Dendritic cell treated with granulocyte-macrophage colony-stimulating factor and Interleukin-4, amounts not matched to agents 40 ng/mL and 50 ng/mL, for 4 days (primary cell): ENCODE measurements at regions of chrX and their contacts with region 1.

Region 1: DNA sequence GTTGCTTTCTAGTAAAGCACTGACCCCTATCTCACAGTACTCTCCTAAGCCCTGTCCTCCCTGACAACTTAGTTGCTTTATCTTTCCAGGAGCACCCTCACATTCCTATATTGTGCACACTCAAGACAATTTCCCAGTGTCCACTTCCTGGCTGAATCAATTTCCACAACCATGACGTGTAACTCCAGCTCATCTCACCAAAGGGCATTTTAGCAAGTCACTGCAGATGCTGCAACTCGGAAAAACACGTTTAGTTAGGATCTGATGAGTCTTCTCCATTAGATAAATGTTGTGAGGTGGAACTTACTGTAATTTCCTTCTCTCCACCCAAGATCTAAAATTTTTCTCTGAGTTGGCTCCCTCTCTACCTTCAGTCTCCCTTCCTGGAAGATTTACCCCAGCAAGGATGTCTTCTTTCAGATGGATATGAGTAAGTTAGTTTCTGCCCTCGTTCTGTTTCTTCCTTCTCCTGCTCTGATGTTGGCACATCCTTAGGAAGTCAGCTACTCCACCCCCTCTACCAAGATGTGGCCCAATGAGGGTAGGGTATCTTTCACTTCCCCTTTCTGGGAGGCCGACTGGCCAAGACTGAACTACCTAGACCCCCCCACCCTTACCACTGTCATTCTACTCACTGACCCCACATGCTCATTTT is 28.8 kb upstream of the IL13RA1 start:
- H3K4me3 Mint-ChIP-seq: peak overlapping the region; percentile 56
- H3K27ac Mint-ChIP-seq: peak overlapping the region; percentile 84
- H3K4me1 Mint-ChIP-seq: peaks cover 25% of the 10 kb centered on the region
- H3K27me3 Mint-ChIP-seq: no peaks in the 10 kb centered on the region

Region 2: GRCh38 chrX:118718737-118719136 is 20.1 kb after region 1 on chrX:
- intact Hi-C with region 1: loop called (anchors 1 kb)
- H3K4me3 Mint-ChIP-seq: peak overlapping the region; percentile 20
- H3K27ac Mint-ChIP-seq: peak overlapping the region; percentile 93
- H3K4me1 Mint-ChIP-seq: peaks cover 56% of the 10 kb centered on the region
- H3K27me3 Mint-ChIP-seq: no peaks in the 10 kb centered on the region

Region 3: GRCh38 chrX:118736394-118737010 is 37.9 kb after region 1 on chrX:
- intact Hi-C with region 1: loop called (anchors 5 kb)
- H3K4me3 Mint-ChIP-seq: peak overlapping the region; percentile 41
- H3K27ac Mint-ChIP-seq: peak overlapping the region; percentile 75
- H3K4me1 Mint-ChIP-seq: peaks cover 48% of the 10 kb centered on the region
- H3K27me3 Mint-ChIP-seq: no peaks in the 10 kb centered on the region

Region 4: DNA sequence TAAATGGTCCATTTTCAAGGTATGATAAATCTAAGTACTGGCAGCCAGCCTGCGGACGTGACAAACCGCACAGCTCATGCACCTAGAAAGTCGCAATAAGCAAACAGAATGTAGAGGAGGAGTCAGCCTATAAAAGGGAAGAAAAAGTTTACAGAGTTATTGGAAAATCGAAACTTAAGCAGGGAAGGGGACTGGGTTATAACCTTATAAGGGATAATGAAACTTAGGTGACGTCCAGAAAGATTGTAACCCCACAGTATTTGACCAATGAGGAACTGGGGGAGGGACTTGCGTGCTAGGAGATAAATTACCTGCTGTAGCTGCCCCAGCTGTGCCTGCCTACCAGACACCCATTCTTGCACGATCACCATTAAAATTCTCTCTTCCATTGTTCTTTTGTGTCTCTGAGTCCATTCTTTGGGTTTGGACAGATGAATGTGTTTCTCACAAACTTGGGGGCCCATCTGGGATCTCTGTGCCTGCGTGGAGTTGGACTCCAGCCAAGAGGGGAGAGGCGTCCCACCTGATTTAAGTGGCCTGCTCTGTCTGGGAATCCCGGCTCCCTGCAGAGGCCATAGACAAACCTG is 186.0 kb after region 1 on chrX:
- intact Hi-C with region 1: no loop called
- H3K4me3 Mint-ChIP-seq: no peak overlapping the region
- H3K27ac Mint-ChIP-seq: no peak overlapping the region
- H3K4me1 Mint-ChIP-seq: no peaks in the 10 kb centered on the region
- H3K27me3 Mint-ChIP-seq: peaks cover 5% of the 10 kb centered on the region